ENCODE measurements at regions of chr6 and their contacts with region 1.

Region 1: DNA sequence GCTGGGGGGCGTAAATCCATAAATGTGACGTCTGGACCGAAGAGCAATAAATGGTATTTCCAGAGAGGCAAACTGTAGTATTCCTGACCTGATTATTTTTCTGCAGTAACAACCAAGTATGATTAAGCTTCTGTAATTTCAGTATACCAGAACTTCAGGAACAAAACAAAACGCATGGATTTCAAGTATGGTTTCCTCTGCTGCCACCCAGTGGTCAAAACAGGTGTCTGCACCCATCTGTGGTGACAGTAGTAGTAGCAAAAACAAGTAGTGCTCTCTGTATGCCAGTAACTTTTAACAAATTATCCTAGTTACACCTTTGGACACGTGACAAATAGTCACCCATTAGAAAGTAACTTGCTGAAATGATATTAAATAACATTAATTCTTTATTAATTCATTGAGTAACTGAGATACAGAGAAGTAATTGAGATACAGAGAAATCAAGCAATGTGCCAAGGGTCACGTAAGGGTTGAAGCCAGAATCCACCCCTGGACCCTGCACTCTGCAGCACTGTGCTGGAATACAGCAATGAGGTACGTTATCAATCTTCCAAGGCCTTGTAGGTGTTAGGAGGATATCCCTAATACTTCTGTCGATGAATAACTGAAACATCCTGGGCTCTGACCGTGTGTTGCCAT is 7.9 kb downstream of the CALHM4 start:
- DNase-seq: peak; percentile 63
- CTCF ChIP-seq: peak; percentile 88

Region 2: DNA sequence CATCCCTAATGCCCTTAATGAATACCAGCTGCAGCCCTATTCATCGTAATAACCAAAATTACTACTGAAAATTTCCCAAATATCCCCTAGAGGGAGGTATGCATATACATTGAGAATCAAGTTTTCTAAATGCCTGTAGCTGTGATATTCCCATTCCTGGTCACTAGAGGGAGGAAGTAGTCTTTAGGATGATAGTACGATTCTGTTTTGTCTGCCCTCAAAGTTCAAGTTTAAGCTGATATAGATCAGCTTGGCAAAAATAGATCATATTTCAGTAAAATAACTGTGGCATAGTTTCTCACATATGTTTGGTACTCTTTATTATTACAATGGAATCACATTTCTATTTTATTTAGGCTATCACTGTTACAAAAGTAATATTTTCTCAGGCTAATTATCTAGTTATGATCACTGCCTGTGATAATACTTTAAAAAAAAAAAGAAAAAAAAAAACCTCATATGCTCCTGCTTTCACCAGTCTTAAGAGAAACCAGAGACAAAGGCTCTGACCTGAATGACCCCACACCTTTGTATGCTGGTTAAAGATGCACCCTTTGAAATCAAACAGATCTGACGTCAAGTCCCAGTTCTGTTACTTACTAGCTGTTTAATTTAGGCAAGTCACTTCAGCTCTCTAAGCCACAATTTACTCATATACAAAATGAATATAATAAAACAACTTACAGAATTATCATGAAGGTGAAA is 292.8 kb before region 1 on chr6:
- in situ Hi-C with region 1: loop called (anchors 10 kb)
- DNase-seq: peak; percentile 49
- CTCF ChIP-seq: peak; percentile 71

Region 3: DNA sequence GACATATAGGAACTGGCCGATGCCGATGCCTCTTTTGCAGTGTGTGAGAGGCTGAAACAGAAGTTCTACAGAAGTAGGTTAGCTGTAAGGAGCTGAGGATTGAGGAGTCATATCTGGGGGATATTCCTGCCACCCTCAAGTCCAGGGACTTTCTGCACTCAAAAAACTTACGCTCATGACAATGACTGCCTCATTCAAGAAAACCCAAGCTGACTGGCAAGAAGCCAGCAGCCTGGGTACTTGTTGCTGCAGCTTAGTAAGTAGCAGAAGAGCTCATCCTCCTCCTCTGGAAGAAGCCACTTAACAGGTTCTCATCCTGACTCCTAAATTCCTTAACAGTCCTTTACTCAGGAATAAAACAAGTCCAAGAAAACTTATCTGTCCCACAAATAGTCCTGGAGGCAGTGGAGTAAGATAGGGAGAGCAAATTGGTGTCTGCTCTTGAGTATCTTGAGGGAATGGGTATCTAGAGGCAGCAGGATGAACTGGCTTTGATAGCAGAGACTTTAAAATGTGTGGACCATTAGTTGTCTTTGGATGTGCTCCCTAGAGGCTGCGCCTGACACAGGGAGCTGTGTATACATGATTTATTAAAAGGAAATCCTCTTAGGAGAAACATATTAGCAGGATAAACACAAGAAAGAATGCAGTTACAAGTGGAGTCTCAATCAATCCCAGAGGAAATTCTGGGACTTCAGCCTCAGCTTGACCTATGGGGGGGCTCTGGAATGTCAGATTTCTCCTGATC is 42.7 kb before region 1 on chr6:
- in situ Hi-C with region 1: no loop called
- DNase-seq: no peak
- CTCF ChIP-seq: no peak

Region 4: DNA sequence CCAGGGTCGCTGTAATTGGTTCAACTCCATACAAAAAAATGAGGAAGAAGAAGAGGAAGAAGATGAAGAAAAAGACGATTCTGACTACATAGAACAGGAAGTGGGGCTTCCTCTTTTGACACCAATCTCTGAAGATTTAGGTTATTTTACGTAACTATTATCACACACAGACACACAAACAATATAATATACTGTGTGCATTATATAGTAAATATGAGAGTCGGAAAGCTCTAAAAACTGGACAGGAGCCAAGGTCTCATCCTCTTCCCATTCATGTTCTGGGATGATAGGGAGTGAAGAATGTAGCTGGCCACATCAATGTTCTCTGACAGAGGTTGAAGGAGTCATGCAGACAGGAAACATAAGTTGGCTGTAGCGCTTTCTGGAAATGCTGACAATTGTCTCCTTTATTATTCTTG is 68.1 kb after region 1 on chr6:
- in situ Hi-C with region 1: no loop called
- DNase-seq: no peak
- CTCF ChIP-seq: no peak